ENCODE measurements at regions of chr3 and their contacts with region 1.

Region 1: GRCh38 chr3:71064288-71064955 is 519.1 kb downstream of the FOXP1 start:
- DNase-seq: peak; percentile 76
- H3K4me3 ChIP-seq: peak overlapping the region; percentile 64 to 93 (median 84)
- H3K27ac ChIP-seq: peak overlapping the region; percentile 83
- H3K4me1 ChIP-seq: peaks cover 55% of the 10 kb centered on the region
- H3K27me3 ChIP-seq: no peaks in the 10 kb centered on the region
- CTCF ChIP-seq: no peak
- POLR2A ChIP-seq: peak; percentile 24

Region 2: GRCh38 chr3:70090322-70090913 is 974.0 kb before region 1 on chr3:
- CTCF ChIA-PET with region 1: no interaction called
- POLR2A ChIA-PET with region 1: no interaction called
- dilution Hi-C with region 1: no loop called
- intact Hi-C with region 1: loop called (anchors 10 kb)
- DNase-seq: peak; percentile 52
- H3K4me3 ChIP-seq: no peak overlapping the region
- H3K27ac ChIP-seq: no peak overlapping the region
- H3K4me1 ChIP-seq: no peaks in the 10 kb centered on the region
- H3K27me3 ChIP-seq: no peaks in the 10 kb centered on the region
- CTCF ChIP-seq: peak; percentile 42 to 52
- POLR2A ChIP-seq: no peak

Region 3: DNA sequence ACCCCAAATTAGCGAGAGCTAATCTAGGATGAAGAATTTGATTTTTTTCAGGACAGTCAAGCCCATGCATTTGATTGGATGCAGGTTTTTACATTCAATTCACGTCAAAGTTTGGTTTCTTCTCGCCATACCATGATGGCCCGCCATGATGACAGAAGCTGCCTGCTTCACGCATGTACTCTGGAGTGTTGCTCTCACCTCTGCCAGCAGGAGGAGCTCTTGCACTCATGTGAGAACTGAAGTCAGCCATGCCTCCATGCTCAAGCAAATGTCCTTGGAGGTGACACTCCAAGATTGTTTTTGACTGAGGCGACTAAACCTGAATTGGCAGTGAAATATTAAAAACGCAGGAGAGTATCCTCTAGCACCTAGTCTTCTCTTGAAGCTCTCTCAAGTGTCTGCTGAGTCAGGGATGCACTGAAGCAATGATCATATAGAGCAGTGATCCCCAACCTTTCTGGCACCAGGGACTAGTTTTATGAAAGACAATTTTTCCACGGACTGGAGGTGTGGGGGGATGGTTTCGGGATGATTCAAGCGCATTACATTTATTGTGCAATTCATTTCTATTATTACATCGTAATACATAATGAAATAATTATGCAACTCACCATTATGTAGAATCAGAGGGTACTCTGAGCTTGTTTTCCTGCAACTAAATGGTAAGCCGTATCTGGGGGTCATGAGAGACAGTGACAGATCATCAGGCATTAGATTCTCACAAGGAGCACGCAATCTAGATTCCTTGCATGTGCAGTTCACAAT is 943.9 kb before region 1 on chr3:
- CTCF ChIA-PET with region 1: no interaction called
- POLR2A ChIA-PET with region 1: no interaction called
- dilution Hi-C with region 1: no loop called
- intact Hi-C with region 1: no loop called
- DNase-seq: peak; percentile 63
- H3K4me3 ChIP-seq: no peak overlapping the region
- H3K27ac ChIP-seq: no peak overlapping the region
- H3K4me1 ChIP-seq: no peaks in the 10 kb centered on the region
- H3K27me3 ChIP-seq: no peaks in the 10 kb centered on the region
- CTCF ChIP-seq: peak; percentile 75 to 84
- POLR2A ChIP-seq: no peak

Region 4: GRCh38 chr3:70737678-70738306 is 326.6 kb before region 1 on chr3:
- CTCF ChIA-PET with region 1: no interaction called
- POLR2A ChIA-PET with region 1: no interaction called
- dilution Hi-C with region 1: no loop called
- intact Hi-C with region 1: loop called (anchors 5 kb)
- DNase-seq: peak; percentile 97
- H3K4me3 ChIP-seq: no peak overlapping the region
- H3K27ac ChIP-seq: peak overlapping the region; percentile 84
- H3K4me1 ChIP-seq: peaks cover 13% of the 10 kb centered on the region
- H3K27me3 ChIP-seq: no peaks in the 10 kb centered on the region
- CTCF ChIP-seq: no peak
- POLR2A ChIP-seq: no peak

Region 5: DNA sequence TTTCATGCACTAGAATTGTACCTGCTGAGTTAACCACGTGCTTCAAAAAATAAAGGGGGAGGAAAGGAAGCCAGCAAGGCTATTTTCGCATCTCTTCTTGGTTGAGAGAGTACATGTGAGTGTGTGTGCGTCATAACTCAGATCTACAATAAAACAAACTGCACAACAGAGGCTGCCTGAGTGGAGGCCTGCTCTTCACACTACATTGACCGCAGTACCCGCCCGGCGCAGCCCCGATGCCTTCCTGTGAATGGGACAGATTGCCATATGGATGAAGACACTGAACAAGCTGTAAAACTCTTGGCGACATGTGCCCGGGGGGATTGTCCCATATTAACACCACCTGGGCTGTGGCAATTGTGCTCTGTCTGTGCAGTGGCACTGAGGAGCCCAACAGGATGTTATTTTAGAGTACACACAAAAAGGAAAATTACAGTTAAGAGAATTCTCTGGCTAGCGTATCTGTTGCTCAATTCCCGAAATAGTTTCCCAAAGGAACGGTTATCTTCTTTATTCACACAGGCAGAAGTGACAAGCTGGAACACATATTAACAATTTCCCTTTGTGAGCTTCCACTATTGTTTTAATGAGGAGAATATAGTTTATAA is 32.4 kb before region 1 on chr3:
- CTCF ChIA-PET with region 1: interaction called, 4 read pairs
- POLR2A ChIA-PET with region 1: no interaction called
- dilution Hi-C with region 1: no loop called
- intact Hi-C with region 1: loop called (anchors 1 kb)
- DNase-seq: peak; percentile 49
- H3K4me3 ChIP-seq: no peak overlapping the region
- H3K27ac ChIP-seq: no peak overlapping the region
- H3K4me1 ChIP-seq: peaks cover 27% of the 10 kb centered on the region
- H3K27me3 ChIP-seq: no peaks in the 10 kb centered on the region
- CTCF ChIP-seq: no peak
- POLR2A ChIP-seq: no peak

Region 6: GRCh38 chr3:71103430-71103921 is 39.1 kb after region 1 on chr3:
- CTCF ChIA-PET with region 1: no interaction called
- POLR2A ChIA-PET with region 1: no interaction called
- dilution Hi-C with region 1: no loop called
- intact Hi-C with region 1: loop called (anchors 2 kb)
- DNase-seq: peak; percentile 94
- H3K4me3 ChIP-seq: no peak overlapping the region
- H3K27ac ChIP-seq: peak overlapping the region; percentile 92
- H3K4me1 ChIP-seq: peaks cover 65% of the 10 kb centered on the region
- H3K27me3 ChIP-seq: no peaks in the 10 kb centered on the region
- CTCF ChIP-seq: no peak
- POLR2A ChIP-seq: no peak

Region 7: GRCh38 chr3:71305231-71306206 is 241.1 kb after region 1 on chr3:
- CTCF ChIA-PET with region 1: no interaction called
- POLR2A ChIA-PET with region 1: no interaction called
- dilution Hi-C with region 1: no loop called
- intact Hi-C with region 1: loop called (anchors 2 kb)
- DNase-seq: peak; percentile 71
- H3K4me3 ChIP-seq: peak overlapping the region; percentile 24 to 60 (median 41)
- H3K27ac ChIP-seq: peak overlapping the region; percentile 19
- H3K4me1 ChIP-seq: peaks cover 24% of the 10 kb centered on the region
- H3K27me3 ChIP-seq: no peaks in the 10 kb centered on the region
- CTCF ChIP-seq: no peak
- POLR2A ChIP-seq: no peak

Region 8: DNA sequence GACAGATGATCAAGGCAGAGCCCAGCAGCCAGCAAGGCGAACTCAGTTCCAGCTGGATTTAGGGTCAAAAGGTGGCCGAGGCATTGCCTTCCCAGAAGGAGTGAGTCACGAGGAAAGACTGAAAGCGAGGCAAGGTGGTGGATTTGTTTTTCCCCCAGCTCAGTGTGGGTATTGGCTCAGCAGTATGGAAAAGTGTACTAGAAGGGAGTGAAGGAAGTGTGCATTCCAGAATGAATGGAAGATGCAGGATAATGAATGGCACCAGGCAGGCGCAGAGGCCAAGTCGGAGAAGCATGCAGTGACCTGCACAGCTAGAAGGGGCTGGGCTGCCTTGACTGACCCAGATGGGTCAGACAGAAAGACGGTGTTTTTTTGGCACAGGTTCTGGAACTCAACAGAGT is 472.8 kb after region 1 on chr3:
- CTCF ChIA-PET with region 1: no interaction called
- POLR2A ChIA-PET with region 1: no interaction called
- dilution Hi-C with region 1: no loop called
- intact Hi-C with region 1: loop called (anchors 5 kb)
- DNase-seq: peak; percentile 98
- H3K4me3 ChIP-seq: no peak overlapping the region
- H3K27ac ChIP-seq: peak overlapping the region; percentile 60
- H3K4me1 ChIP-seq: peaks cover 56% of the 10 kb centered on the region
- H3K27me3 ChIP-seq: no peaks in the 10 kb centered on the region
- CTCF ChIP-seq: no peak
- POLR2A ChIP-seq: no peak